ENCODE measurements at regions of chr6 and their contacts with region 1.

Region 1: GRCh38 chr6:11232193-11232769 is at the start of gene NEDD9:
- DNase-seq: peak; percentile 97
- H3K4me3 Mint-ChIP-seq: peak within 1 kb of the TSS; percentile 73
- H3K27ac Mint-ChIP-seq: peak within 1 kb of the TSS; percentile 85
- H3K4me1 Mint-ChIP-seq: peaks cover 41% of the 10 kb centered on the region
- H3K27me3 Mint-ChIP-seq: no peaks in the 10 kb centered on the region
- CTCF ChIP-seq: no peak
- total RNA-seq, gene NEDD9: 2.2 and 4.4 TPM in 2 replicates

Region 2: DNA sequence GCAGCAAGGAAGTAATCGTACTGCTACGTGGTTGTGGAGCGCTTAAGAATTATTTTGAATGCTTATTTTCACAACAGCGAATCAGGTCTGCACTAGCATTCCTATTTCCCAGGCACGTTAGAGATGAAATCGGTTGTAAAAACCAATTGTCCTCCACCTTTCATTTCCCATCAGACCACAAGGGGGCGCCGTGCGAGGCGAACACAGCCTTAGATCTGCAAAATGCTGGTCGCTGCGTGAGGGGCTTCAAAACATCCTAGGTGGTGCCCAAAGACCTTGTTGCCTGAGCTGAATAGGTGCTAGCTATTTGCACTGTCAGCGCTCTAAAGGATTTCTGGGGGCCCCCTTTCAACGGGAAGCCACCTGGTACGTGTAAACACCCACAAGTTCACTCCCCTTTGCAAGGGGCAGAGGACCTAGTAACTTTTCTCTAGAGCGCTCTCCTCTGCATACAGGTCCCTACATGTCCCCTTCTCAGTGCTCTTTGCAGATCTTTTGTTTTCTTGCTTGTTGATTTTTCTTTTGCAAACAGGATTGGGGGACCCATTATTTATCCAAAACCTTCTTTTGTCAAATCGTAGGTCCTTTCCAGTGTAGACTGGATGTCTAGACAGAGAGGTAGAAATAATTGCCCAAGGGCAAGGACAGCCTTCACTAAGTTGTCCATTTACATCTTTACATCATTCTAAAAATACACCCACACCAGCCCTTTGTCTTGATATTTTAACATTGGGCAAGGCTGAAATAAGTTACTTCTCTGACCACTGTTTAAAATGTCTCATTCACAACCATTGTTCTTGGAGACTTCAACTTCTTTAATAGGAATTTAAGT is 59.6 kb before region 1 on chr6:
- CTCF ChIA-PET with region 1: interaction called, 7 read pairs
- POLR2A ChIA-PET with region 1: no interaction called
- intact Hi-C with region 1: loop called (anchors 2 kb)
- DNase-seq: peak; percentile 63
- H3K4me3 Mint-ChIP-seq: no peak overlapping the region
- H3K27ac Mint-ChIP-seq: no peak overlapping the region
- H3K4me1 Mint-ChIP-seq: peaks cover 6% of the 10 kb centered on the region
- H3K27me3 Mint-ChIP-seq: no peaks in the 10 kb centered on the region
- CTCF ChIP-seq: peak; percentile 68

Region 3: GRCh38 chr6:11317885-11318771 is 85.8 kb after region 1 on chr6:
- CTCF ChIA-PET with region 1: no interaction called
- POLR2A ChIA-PET with region 1: interaction called, 4 read pairs
- intact Hi-C with region 1: loop called (anchors 2 kb)
- DNase-seq: peak; percentile 95
- H3K4me3 Mint-ChIP-seq: no peak overlapping the region
- H3K27ac Mint-ChIP-seq: peak overlapping the region; percentile 4
- H3K4me1 Mint-ChIP-seq: peaks cover 33% of the 10 kb centered on the region
- H3K27me3 Mint-ChIP-seq: no peaks in the 10 kb centered on the region
- CTCF ChIP-seq: no peak

Region 4: GRCh38 chr6:11403035-11403630 is 170.9 kb after region 1 on chr6:
- CTCF ChIA-PET with region 1: no interaction called
- POLR2A ChIA-PET with region 1: no interaction called
- intact Hi-C with region 1: no loop called
- DNase-seq: no peak
- H3K4me3 Mint-ChIP-seq: no peak overlapping the region
- H3K27ac Mint-ChIP-seq: no peak overlapping the region
- H3K4me1 Mint-ChIP-seq: no peaks in the 10 kb centered on the region
- H3K27me3 Mint-ChIP-seq: no peaks in the 10 kb centered on the region
- CTCF ChIP-seq: no peak